Adrenal gland (tissue), 19 donors: ENCODE measurements at regions of chr3 and their contacts with region 1.

Region 1: GRCh38 chr3:12984023-12984823 is 89.0 kb downstream of the IQSEC1 start:
- DNase-seq: peak; percentile 71 to 91 (median 82)
- H3K4me3 ChIP-seq: no peak overlapping the region
- H3K27ac ChIP-seq: peak overlapping the region in 3 of 5 donors; percentile 35 to 46 (median 45)
- H3K4me1 ChIP-seq: peaks cover 18 to 40% of the 10 kb centered on the region in 2 donors
- H3K27me3 ChIP-seq: no peaks in the 10 kb centered on the region
- CTCF ChIP-seq: peak; percentile 68 to 80 (median 76)
- POLR2A ChIP-seq: no peak

Region 2: DNA sequence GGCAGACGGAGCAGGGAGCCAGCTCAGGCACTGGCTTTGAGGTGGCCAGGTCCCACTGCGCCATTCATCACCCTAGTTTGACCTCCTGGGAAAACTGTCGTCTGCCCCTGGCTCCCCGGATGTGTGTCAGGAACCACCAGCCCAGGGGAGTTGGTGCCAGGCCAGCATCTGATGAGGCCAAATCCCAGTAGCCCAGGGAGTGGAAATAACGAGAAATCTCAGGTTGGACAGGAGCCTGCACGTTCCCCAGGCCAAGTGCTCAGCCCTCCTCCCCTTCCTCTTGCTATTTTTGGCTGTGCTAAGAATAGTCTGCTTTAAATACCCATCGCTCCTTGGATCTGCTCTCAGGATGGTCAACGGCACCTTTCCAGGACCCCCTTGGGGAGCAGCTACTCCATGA is 49.8 kb before region 1 on chr3:
- intact Hi-C with region 1: loop called (anchors 10 kb)
- DNase-seq: peak; percentile 78 to 96 (median 95)
- H3K4me3 ChIP-seq: no peak overlapping the region
- H3K27ac ChIP-seq: peak overlapping the region in 4 of 5 donors; percentile 63 to 85 (median 74)
- H3K4me1 ChIP-seq: peaks cover 15 to 34% of the 10 kb centered on the region in 2 donors
- H3K27me3 ChIP-seq: no peaks in the 10 kb centered on the region
- CTCF ChIP-seq: no peak
- POLR2A ChIP-seq: no peak